ENCODE measurements at regions of chr20 and their contacts with region 1.

Region 1: GRCh38 chr20:46349035-46349741 is 40.9 kb upstream of the CDH22 start:
- DNase-seq: peak in 1 of 2 experiments; percentile 86
- H3K4me3 ChIP-seq: peak overlapping the region in 1 of 4 experiments; percentile 34; a peak in 1 of 8 replicates
- H3K27ac ChIP-seq: no peak overlapping the region
- H3K4me1 ChIP-seq: peaks cover 0 to 27% (median 17%) of the 10 kb centered on the region in 4 experiments; a peak in 6 of 7 replicates
- H3K27me3 ChIP-seq: peaks cover 0 to 5% (median 1%) of the 10 kb centered on the region in 4 experiments; a peak in 4 of 7 replicates
- CTCF ChIP-seq: peak; percentile 80 to 90 (median 89)
- EP300 ChIP-seq: no peak
- POLR2A ChIP-seq: no peak
- RAD21 ChIP-seq: peak; percentile 91 to 96

Region 2: DNA sequence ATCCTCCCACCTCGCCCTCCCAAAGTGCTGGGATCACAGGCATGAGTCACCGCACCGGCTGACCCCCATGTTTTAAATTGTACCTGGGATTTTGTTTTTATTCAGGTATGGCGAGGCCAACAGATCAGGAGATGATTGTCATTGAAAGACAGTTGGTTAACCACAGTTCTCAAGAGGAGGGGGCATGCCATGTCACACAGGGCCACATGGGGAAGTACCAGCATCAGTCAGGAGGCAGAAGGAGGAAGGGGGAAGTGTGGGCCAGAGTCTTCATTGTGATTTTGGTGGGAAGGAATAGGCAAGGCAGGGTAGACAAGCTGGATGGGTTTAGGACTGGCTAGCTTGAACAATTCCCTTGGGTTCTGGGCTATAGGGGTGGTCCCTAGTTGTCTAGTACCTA is 350.4 kb before region 1 on chr20:
- CTCF ChIA-PET with region 1: no interaction called
- POLR2A ChIA-PET with region 1: no interaction called
- DNase-seq: no peak
- H3K4me3 ChIP-seq: no peak overlapping the region
- H3K27ac ChIP-seq: no peak overlapping the region
- H3K4me1 ChIP-seq: peaks cover 0 to 8% (median 5%) of the 10 kb centered on the region in 4 experiments; a peak in 6 of 7 replicates
- H3K27me3 ChIP-seq: no peaks in the 10 kb centered on the region
- CTCF ChIP-seq: no peak
- EP300 ChIP-seq: no peak
- POLR2A ChIP-seq: no peak
- RAD21 ChIP-seq: no peak

Region 3: DNA sequence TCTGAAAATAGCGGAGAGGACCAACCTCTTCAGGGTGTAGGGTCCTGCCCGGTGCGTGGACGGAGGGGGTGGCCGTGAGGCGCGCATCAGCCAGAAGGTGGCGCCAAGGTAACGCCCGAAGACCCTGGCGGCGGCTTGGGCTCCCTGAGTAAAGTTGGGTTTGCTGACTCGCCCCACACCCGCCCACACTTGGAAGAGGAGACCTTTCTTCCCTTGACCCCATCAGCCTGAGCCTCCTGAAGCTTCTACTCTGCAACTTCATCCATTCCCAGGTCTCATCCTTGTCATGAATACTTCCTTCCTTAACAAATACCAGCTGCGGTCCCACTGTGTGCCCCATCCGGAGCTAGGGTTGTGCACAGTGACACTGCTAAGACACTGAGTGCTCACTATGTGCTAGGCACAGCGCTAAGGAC is 216.5 kb before region 1 on chr20:
- CTCF ChIA-PET with region 1: interaction called, 55 read pairs
- POLR2A ChIA-PET with region 1: interaction called, 4 read pairs
- DNase-seq: peak in 1 of 2 experiments; percentile 93
- H3K4me3 ChIP-seq: no peak overlapping the region
- H3K27ac ChIP-seq: no peak overlapping the region
- H3K4me1 ChIP-seq: peaks cover 0 to 4% (median 4%) of the 10 kb centered on the region in 4 experiments; a peak in 6 of 7 replicates
- H3K27me3 ChIP-seq: peaks cover 0 to 4% (median 2%) of the 10 kb centered on the region in 4 experiments; a peak in 4 of 7 replicates
- CTCF ChIP-seq: peak; percentile 91 to 96 (median 96)
- EP300 ChIP-seq: no peak
- POLR2A ChIP-seq: no peak
- RAD21 ChIP-seq: peak; percentile 97

Region 4: GRCh38 chr20:46174469-46175128 is 174.6 kb before region 1 on chr20:
- CTCF ChIA-PET with region 1: interaction called, 14 read pairs
- POLR2A ChIA-PET with region 1: no interaction called
- DNase-seq: peak; percentile 70 to 92
- H3K4me3 ChIP-seq: peak overlapping the region; percentile 9 to 50 (median 20); a peak in 5 of 8 replicates
- H3K27ac ChIP-seq: no peak overlapping the region
- H3K4me1 ChIP-seq: no peaks in the 10 kb centered on the region; a peak in 1 of 7 replicates
- H3K27me3 ChIP-seq: peaks cover 8 to 33% (median 32%) of the 10 kb centered on the region in 4 experiments
- CTCF ChIP-seq: peak; percentile 82 to 88 (median 85)
- EP300 ChIP-seq: no peak; a peak in 1 of 3 replicates
- POLR2A ChIP-seq: no peak
- RAD21 ChIP-seq: peak; percentile 65 to 82

Region 5: GRCh38 chr20:46296526-46297250 is 52.5 kb before region 1 on chr20:
- CTCF ChIA-PET with region 1: interaction called, 23 read pairs
- POLR2A ChIA-PET with region 1: no interaction called
- DNase-seq: no peak
- H3K4me3 ChIP-seq: no peak overlapping the region
- H3K27ac ChIP-seq: no peak overlapping the region
- H3K4me1 ChIP-seq: peaks cover 0 to 9% (median 3%) of the 10 kb centered on the region in 4 experiments; a peak in 4 of 7 replicates
- H3K27me3 ChIP-seq: peaks cover 0 to 3% (median 0%) of the 10 kb centered on the region in 4 experiments; a peak in 1 of 7 replicates
- CTCF ChIP-seq: no peak
- EP300 ChIP-seq: no peak
- POLR2A ChIP-seq: no peak
- RAD21 ChIP-seq: no peak

Region 6: GRCh38 chr20:46316984-46317684 is 32.1 kb before region 1 on chr20:
- CTCF ChIA-PET with region 1: interaction called, 63 read pairs
- POLR2A ChIA-PET with region 1: interaction called, 5 read pairs
- DNase-seq: no peak
- H3K4me3 ChIP-seq: no peak overlapping the region
- H3K27ac ChIP-seq: no peak overlapping the region
- H3K4me1 ChIP-seq: peaks cover 0 to under 1% (median 0%) of the 10 kb centered on the region in 4 experiments; a peak in 2 of 7 replicates
- H3K27me3 ChIP-seq: peaks cover 0 to 26% (median 19%) of the 10 kb centered on the region in 4 experiments; a peak in 6 of 7 replicates
- CTCF ChIP-seq: no peak
- EP300 ChIP-seq: no peak
- POLR2A ChIP-seq: no peak
- RAD21 ChIP-seq: no peak

Region 7: GRCh38 chr20:46330072-46330763 is 19.0 kb before region 1 on chr20:
- CTCF ChIA-PET with region 1: interaction called, 214 read pairs
- POLR2A ChIA-PET with region 1: interaction called, 10 read pairs
- DNase-seq: no peak
- H3K4me3 ChIP-seq: no peak overlapping the region
- H3K27ac ChIP-seq: no peak overlapping the region
- H3K4me1 ChIP-seq: peaks cover 0 to 27% (median 9%) of the 10 kb centered on the region in 4 experiments; a peak in 6 of 7 replicates
- H3K27me3 ChIP-seq: peaks cover 0 to 3% (median 0%) of the 10 kb centered on the region in 4 experiments; a peak in 2 of 7 replicates
- CTCF ChIP-seq: no peak
- EP300 ChIP-seq: no peak
- POLR2A ChIP-seq: no peak
- RAD21 ChIP-seq: no peak

Region 8: DNA sequence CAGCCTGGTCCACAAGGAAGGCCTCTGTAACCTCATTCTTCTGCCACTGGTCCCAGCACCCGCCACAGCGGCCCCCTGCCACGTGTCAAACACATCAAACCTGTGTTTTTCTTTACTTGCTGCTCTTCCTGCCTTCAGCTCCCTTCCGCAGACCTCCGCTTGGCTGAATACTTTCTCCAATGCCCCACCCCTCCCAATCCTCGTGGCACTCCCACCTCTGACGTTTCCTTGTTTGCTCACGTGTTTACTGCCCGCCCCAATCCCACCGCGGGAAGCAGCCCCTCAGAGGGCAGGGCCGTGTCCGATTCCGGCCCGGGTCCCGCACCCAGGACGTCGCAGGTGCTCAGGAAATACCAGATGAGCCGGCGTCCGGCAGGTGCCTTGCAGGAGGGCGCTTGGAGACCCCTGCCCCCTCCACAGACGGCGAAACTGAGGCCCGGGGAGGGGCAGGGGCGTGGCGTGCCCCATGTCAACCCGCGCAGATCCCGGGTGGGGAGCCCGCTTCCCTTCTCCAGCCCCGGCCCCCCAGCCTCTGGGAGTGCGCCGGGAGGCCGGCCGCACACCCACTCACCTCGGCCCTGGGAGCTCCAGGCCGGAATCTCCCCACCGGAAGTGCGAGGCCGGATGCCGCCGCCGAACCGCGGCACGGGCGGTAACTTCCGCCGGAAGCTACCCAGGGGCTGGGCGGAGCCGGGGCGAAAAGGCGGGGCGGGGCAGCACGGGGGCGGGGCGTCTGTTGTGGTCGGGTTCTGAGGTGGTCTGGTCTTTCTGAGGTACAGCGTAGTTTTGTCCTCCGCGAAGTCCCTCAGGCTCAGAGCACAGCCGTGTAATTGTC is 14.8 kb after region 1 on chr20:
- CTCF ChIA-PET with region 1: interaction called, 29 read pairs
- POLR2A ChIA-PET with region 1: interaction called, 16 read pairs
- DNase-seq: peak in 1 of 2 experiments; percentile 91
- H3K4me3 ChIP-seq: peak overlapping the region; percentile 84 to 98 (median 96)
- H3K27ac ChIP-seq: peak overlapping the region; percentile 98
- H3K4me1 ChIP-seq: peaks cover 0 to 4% (median 0%) of the 10 kb centered on the region in 4 experiments; a peak in 2 of 7 replicates
- H3K27me3 ChIP-seq: no peaks in the 10 kb centered on the region
- CTCF ChIP-seq: no peak
- EP300 ChIP-seq: no peak
- POLR2A ChIP-seq: peak; percentile 76 to 96
- RAD21 ChIP-seq: no peak

Region 9: GRCh38 chr20:46430921-46431712 is 81.9 kb after region 1 on chr20:
- CTCF ChIA-PET with region 1: no interaction called
- POLR2A ChIA-PET with region 1: no interaction called
- DNase-seq: no peak
- H3K4me3 ChIP-seq: no peak overlapping the region
- H3K27ac ChIP-seq: no peak overlapping the region
- H3K4me1 ChIP-seq: peaks cover 0 to 6% (median 2%) of the 10 kb centered on the region in 4 experiments; a peak in 3 of 7 replicates
- H3K27me3 ChIP-seq: no peaks in the 10 kb centered on the region; a peak in 1 of 7 replicates
- CTCF ChIP-seq: no peak
- EP300 ChIP-seq: no peak
- POLR2A ChIP-seq: no peak
- RAD21 ChIP-seq: no peak

Region 10: DNA sequence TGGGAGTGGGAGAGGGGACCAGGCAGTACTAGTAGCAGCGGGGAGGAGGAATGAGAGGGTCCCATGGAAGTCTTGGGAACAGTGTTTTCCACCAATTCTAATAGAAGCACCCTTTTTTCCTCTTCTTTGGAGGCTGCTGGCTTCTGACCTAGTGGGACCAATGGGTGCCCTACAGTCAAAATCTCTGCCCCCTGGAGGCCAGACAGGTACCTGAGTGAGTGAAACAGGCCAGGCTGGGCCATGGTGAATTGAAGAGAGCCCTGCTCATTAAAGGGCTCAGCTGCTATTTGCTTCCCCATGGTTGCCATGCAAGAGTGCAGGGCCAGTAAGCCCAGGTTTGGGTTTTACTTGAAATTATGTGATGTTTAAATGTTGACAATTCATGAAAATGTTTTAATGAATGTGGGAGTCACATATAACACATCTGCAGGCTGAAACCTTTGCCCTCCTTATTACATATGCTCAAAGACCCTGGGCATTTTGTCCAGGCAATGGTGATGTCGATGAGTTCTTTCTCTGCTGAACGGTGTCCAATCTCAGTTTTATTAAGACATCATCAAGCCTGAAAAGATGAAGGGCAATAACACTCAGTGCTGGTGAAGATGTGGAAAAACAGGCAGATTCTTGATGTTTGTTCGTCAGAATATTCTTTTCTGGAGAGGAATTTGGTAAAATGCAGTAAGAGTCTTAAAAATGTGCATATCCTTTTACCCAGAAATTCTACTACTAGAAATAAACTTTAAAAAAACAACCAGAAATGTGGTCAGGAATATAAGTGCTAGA is 243.6 kb after region 1 on chr20:
- CTCF ChIA-PET with region 1: no interaction called
- POLR2A ChIA-PET with region 1: no interaction called
- DNase-seq: no peak
- H3K4me3 ChIP-seq: no peak overlapping the region
- H3K27ac ChIP-seq: no peak overlapping the region
- H3K4me1 ChIP-seq: peaks cover 0 to 8% (median 6%) of the 10 kb centered on the region in 4 experiments; a peak in 4 of 7 replicates
- H3K27me3 ChIP-seq: no peaks in the 10 kb centered on the region
- CTCF ChIP-seq: peak; percentile 39 to 56 (median 51); a peak in 3 of 4 replicates
- EP300 ChIP-seq: no peak
- POLR2A ChIP-seq: no peak
- RAD21 ChIP-seq: peak in 1 of 2 experiments; percentile 46; a peak in 1 of 4 replicates